Left cardiac atrium (tissue), 4 donors: ENCODE measurements at regions of chr21 and their contacts with region 1.

Region 1: GRCh38 chr21:37366482-37367316 is at the start of gene DYRK1A:
- DNase-seq: peak; percentile 98
- ATAC-seq: peak; percentile 93 to 94
- total RNA-seq, gene DYRK1A: 53.0 to 68.3 TPM

Region 2: GRCh38 chr21:37208056-37208721 is 158.5 kb before region 1 on chr21:
- intact Hi-C with region 1: loop called in 1 of 2 experiments (anchors 5 kb)
- DNase-seq: peak; percentile 76
- ATAC-seq: peak; percentile 89 to 94

Region 3: DNA sequence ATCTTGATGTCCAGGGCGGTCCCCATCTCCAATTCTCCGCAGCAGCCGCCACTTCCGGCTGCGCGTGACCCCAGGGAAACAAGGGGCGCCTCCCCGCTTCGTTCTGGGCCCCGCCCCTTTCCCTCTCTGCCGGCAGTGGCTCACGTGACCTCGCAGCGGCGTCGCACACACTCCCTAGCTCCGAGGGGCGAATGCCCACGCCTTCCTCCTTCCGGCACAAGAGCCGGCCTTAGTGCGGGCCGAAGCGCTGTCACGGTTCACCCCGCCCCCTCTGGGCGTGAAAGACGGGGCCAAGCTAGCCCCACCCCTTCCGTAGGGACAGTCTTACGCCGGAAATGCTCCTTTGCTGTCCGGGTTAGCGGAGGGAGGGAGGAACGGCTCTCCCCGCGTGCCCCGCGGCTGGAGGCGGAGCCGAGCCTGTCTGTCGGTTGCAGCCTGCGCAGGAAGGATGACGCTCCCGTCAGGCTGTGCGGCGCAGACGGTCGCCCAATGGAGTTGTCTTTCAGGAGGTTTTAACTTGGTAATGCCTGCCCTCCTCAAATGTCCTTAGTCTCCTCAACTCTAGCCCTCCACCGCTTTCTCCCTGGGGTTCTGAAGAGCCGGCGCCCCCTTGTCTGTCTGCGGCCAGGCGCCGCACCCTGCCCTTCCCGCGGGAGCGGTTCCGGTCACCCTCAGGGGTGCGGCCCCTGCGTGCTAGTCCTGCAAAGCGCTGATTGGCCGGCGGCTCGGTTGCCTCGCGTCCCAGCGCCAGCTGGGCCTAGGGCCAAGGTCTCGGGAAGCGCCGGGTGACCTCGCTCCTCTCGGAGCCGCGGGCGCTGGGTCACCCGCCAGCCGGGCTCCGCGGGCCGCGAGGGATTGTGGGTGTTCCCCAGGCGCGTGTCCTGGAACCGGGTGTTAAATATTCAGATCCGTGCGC is 99.2 kb before region 1 on chr21 and contains the start of gene VPS26C:
- intact Hi-C with region 1: loop called (anchors 2 to 10 kb)
- DNase-seq: peak; percentile 99
- ATAC-seq: peak; percentile 95 to 97
- total RNA-seq, gene VPS26C: 35.0 to 43.6 TPM

Region 4: DNA sequence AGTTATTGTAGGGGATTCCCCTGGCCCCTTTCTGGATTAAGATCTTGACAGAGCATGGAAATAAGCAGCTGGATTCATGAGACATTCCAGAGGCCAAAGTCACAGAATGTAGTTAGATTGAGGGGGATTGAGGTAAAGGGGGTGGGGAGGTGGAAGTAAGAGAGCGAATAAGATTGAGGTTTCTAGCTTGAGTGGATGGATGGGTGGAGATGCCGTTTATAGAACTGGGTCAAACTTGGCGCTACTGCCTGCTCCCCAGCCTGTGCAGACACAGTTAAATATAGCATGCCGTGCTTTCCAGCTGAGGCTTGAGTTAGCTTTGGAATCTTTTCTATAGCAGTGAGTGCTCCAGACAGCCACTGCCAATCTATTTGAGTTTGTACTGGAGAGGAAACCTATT is 85.5 kb after region 1 on chr21:
- intact Hi-C with region 1: loop called in 1 of 2 experiments (anchors 5 kb)
- DNase-seq: no peak
- ATAC-seq: peak; percentile 79 to 83

Region 5: DNA sequence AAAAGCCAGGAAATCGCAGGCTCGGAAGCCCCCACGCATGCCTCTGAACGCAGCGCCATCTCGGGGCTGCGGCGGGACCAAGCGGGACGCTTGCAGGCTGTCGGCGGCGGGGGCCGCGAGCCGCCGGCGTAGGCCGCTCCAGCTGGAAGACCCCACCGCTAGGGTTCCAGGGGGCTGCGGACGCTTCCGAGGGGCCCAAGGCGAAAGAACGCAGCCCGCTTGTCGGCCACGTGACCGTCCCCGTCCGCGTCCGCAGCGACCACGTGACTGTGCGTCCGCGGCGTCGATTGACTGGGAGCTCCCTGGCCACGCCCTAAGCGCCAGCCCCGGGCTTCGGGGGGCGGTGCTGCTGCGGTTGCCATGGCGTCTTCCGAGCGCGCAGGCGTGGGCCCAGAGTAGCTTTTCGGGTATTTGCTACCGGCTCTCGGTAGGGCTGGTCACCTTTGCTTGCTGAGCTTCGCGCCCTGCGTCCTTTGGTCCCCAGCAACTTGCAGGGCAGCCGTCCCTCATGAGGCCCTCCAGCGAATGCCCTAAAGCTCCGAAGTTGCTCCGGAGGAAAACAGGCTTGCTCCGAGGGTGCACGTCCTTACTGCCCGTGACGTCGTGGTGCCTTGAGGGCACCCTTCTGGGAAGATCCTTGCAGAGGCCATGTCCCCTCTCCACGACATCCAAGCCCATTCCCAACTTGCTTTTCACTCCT is 197.1 kb after region 1 on chr21:
- intact Hi-C with region 1: loop called in 1 of 2 experiments (anchors 2 kb)
- DNase-seq: peak; percentile 96
- ATAC-seq: peak; percentile 96 to 97